Dendritic cell treated with granulocyte-macrophage colony-stimulating factor and Interleukin-4, amounts not matched to agents 40 ng/mL and 50 ng/mL, for 4 days (primary cell): ENCODE measurements at regions of chr22 and their contacts with region 1.

Region 1: GRCh38 chr22:23913661-23914353 is 19.6 kb downstream of the MIF start:
- H3K4me3 Mint-ChIP-seq: peak overlapping the region; percentile 95
- H3K27ac Mint-ChIP-seq: peak overlapping the region; percentile 96
- H3K4me1 Mint-ChIP-seq: peaks cover 24% of the 10 kb centered on the region
- H3K27me3 Mint-ChIP-seq: no peaks in the 10 kb centered on the region

Region 2: GRCh38 chr22:23786752-23787599 is 126.8 kb before region 1 on chr22 and contains the start of gene SMARCB1:
- intact Hi-C with region 1: loop called (anchors 10 kb)
- H3K4me3 Mint-ChIP-seq: peak within 1 kb of the TSS; percentile 77
- H3K27ac Mint-ChIP-seq: peak within 1 kb of the TSS; percentile 89
- H3K4me1 Mint-ChIP-seq: peaks cover 21% of the 10 kb centered on the region
- H3K27me3 Mint-ChIP-seq: peaks cover 4% of the 10 kb centered on the region

Region 3: GRCh38 chr22:23857606-23858483 is 56.0 kb before region 1 on chr22 and contains the start of gene SLC2A11:
- intact Hi-C with region 1: loop called (anchors 5 kb)
- H3K4me3 Mint-ChIP-seq: peak within 1 kb of the TSS; percentile 91
- H3K27ac Mint-ChIP-seq: peak within 1 kb of the TSS; percentile 87
- H3K4me1 Mint-ChIP-seq: peaks cover 17% of the 10 kb centered on the region
- H3K27me3 Mint-ChIP-seq: peaks cover 2% of the 10 kb centered on the region

Region 4: GRCh38 chr22:23893943-23894709 is 19.7 kb before region 1 on chr22 and contains the start of gene MIF:
- intact Hi-C with region 1: loop called (anchors 2 kb)
- H3K4me3 Mint-ChIP-seq: peak within 1 kb of the TSS; percentile 96
- H3K27ac Mint-ChIP-seq: peak within 1 kb of the TSS; percentile 97
- H3K4me1 Mint-ChIP-seq: peaks cover 49% of the 10 kb centered on the region
- H3K27me3 Mint-ChIP-seq: peaks cover 7% of the 10 kb centered on the region

Region 5: DNA sequence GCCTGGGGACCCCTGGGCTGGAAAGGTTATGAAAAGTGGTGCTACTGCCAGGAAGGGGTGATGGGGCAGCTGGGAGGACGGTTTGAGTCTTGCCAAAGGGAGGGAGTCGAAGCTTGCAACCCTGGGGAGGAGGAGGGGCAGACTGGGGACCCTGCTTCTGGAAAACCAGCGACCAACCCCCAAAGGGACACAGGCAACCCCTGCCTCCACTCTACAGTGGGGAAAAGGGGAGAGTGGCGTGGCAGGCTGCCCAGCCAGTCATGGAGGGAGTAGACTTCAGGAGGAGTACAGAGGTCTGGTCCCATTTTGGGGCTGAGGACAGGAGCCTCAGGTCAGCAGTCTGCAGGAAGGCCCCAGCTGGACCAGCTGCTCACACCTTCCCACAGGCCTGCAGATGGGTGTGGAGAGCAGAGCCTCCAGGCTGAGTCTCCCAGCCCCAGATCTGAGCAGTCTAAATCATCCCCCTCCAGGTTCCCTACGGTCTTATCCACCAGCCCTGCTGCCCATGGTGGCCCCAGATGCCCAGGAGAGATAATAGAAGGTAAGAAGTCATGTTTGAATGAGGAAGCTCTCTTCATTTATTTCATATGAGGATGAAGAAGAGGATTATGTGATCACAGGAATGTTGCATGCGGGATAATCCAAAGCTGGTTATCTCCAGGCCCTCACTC is 57.1 kb after region 1 on chr22:
- intact Hi-C with region 1: loop called (anchors 5 kb)
- H3K4me3 Mint-ChIP-seq: no peak overlapping the region
- H3K27ac Mint-ChIP-seq: no peak overlapping the region
- H3K4me1 Mint-ChIP-seq: peaks cover 33% of the 10 kb centered on the region
- H3K27me3 Mint-ChIP-seq: no peaks in the 10 kb centered on the region